ENCODE measurements at regions of chr1 and their contacts with region 1.

Region 1: DNA sequence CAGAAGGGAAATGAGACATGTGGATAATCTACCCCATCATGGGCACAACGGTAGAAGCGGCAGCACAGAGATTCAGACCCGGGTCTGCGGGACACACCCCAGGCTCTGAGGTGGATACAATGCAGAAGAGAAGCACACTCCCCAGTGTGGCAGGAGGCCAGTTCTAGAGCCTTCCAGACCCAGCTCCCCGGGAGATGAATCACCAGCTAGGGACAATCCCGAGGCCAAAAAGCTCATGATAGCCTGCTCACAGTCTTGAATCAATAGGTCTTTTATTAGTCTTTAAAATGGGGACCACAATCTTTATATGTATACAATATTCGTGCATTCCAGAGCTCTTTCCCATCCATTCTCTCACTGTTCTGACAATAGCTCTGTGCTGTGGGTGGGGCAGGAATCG is 57.3 kb upstream of the DIRAS3 start:
- DNase-seq: no peak
- H3K4me3 ChIP-seq: no peak overlapping the region
- H3K27ac ChIP-seq: no peak overlapping the region
- H3K4me1 ChIP-seq: peaks cover 0 to 16% (median 7%) of the 10 kb centered on the region in 3 donors
- H3K27me3 ChIP-seq: no peaks in the 10 kb centered on the region
- CTCF ChIP-seq: no peak
- POLR2A ChIP-seq: no peak

Region 2: DNA sequence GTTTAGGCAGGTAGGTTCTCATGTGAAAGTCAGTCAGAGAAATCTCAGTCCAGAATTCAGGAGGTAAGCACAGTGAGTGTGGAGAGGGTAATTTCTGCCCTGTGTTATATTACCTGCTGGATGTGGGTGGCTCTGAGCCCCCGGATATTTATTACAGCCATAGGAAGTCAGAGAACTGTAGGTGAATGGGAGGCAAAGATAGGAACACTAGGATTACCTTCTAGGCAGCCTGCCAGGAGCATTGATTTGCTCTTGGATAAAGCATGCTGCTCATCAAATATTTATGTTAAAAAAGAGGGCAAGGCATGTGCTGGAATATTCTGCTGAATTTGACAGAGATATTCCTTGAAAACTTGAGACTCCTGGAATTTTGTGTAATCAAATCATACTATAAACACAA is 283.0 kb before region 1 on chr1:
- intact Hi-C with region 1: no loop called
- DNase-seq: no peak
- H3K4me3 ChIP-seq: no peak overlapping the region
- H3K27ac ChIP-seq: no peak overlapping the region
- H3K4me1 ChIP-seq: peaks cover 0 to 60% (median 10%) of the 10 kb centered on the region in 3 donors
- H3K27me3 ChIP-seq: no peaks in the 10 kb centered on the region
- CTCF ChIP-seq: no peak
- POLR2A ChIP-seq: no peak

Region 3: DNA sequence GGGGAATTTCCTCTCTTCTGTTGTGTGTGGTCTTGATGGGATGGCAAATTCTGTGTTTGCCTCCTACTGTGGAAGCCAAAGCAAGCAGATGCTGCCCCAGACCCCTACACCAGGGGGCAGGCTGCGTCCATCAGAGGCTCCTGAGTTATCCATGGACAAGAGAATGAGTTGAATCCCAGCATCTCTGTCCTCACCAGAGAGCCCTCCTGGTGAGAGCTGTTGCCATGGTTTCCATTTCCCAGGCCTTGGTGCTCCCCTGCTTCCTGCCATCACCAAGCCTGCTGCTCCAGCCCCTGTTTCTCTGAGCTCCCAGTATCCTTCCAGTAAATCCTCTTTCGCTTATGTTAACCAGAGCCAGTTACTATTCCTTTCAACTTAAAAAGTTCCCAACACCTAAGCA is 254.1 kb before region 1 on chr1:
- intact Hi-C with region 1: loop called (anchors 5 kb)
- DNase-seq: no peak
- H3K4me3 ChIP-seq: no peak overlapping the region
- H3K27ac ChIP-seq: no peak overlapping the region
- H3K4me1 ChIP-seq: peaks cover 2 to 12% (median 12%) of the 10 kb centered on the region in 3 donors
- H3K27me3 ChIP-seq: no peaks in the 10 kb centered on the region
- CTCF ChIP-seq: peak in 5 of 6 experiments; percentile 49 to 82 (median 57)
- POLR2A ChIP-seq: no peak

Region 4: DNA sequence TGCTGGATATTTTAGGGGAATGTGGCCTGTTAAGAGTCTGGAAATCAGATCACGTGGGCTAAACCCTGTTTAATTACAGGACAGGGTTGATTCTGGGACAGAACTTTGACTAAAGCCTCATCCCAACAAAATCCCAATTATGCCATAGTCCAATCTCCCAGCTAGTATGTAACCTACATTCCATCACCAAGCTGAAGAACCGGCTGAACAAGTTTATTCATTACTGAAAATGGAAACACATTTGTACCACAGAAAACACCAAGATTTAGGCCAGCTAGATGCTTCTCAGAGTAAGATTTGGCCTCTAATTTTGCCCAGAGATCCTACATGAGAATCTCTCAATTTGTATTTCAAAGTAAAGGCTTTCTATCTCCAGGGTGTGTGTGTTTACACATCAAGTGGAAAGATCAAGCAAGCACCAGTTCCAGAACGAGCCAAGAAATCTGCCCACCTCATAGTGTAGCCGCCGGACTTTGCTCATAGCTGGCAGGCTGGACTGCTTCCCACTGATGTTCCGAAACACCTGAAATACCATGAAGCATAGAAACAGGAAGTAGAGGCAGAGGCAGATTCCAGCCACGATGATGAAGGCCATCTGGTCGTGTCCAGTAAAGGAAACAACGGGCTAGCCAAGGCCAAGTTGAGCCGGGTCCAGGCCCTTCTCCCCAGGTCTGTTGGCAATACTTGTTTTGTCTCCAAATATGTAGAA is 37.8 kb after region 1 on chr1:
- intact Hi-C with region 1: no loop called
- DNase-seq: no peak
- H3K4me3 ChIP-seq: no peak overlapping the region
- H3K27ac ChIP-seq: peak overlapping the region in 3 of 4 donors; percentile 5 to 42 (median 6)
- H3K4me1 ChIP-seq: peaks cover 0 to 32% (median 6%) of the 10 kb centered on the region in 3 donors
- H3K27me3 ChIP-seq: no peaks in the 10 kb centered on the region
- CTCF ChIP-seq: no peak
- POLR2A ChIP-seq: no peak

Region 5: DNA sequence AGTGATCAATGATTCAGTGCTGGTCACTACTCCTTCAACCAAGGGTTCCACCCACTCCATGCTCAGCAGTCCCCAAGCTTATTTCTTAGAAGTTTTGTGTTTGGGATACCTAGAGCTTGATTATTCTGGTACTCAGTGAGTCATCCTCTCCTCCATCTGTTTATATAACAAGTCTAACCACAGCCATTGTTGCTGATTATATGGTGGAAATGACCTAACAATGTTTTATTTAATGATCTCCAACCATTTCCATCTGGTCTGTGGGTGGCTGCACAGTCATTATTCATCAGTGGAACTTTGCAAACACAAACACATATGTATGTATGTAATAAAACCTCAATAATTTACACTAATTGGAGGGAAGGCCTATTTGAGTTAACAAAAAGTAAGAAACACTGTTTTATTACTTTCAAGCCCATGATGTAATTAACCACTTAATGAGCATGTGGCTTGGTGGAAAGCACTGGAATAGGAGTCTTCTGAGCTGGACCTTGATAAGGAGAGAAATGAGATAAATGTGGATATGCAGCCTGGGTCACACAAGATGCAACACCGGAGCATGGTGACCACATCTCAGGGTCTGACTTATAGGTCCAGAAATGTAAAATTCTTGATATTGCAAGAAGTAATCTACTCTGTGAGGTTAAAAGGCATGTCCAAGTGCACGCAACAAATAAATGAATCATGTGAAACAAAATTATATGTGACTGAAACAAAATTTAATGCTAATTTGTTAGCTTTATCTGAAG is 223.5 kb after region 1 on chr1:
- intact Hi-C with region 1: no loop called
- DNase-seq: no peak
- H3K4me3 ChIP-seq: no peak overlapping the region
- H3K27ac ChIP-seq: no peak overlapping the region
- H3K4me1 ChIP-seq: no peaks in the 10 kb centered on the region
- H3K27me3 ChIP-seq: no peaks in the 10 kb centered on the region
- CTCF ChIP-seq: no peak
- POLR2A ChIP-seq: no peak

Measured in esophagus squamous epithelium (tissue), 5 donors.